Colonic mucosa (tissue), 4 donors: ENCODE measurements at regions of chr15 and their contacts with region 1.

Region 1: GRCh38 chr15:40323239-40323952 is at the start of gene INAFM2:
- DNase-seq: peak; percentile 87
- H3K4me3 ChIP-seq: peak within 1 kb of the TSS; percentile 81
- H3K27ac ChIP-seq: peak within 1 kb of the TSS; percentile 63
- H3K4me1 ChIP-seq: peaks cover 5% of the 10 kb centered on the region
- H3K27me3 ChIP-seq: no peaks in the 10 kb centered on the region
- CTCF ChIP-seq: peak; percentile 55
- total RNA-seq, gene INAFM2: 10.8 to 28.6 TPM

Region 2: GRCh38 chr15:40367686-40368611 is 44.6 kb after region 1 on chr15:
- intact Hi-C with region 1: loop called (anchors 5 kb)
- DNase-seq: peak; percentile 85
- H3K4me3 ChIP-seq: peak overlapping the region; percentile 32
- H3K27ac ChIP-seq: peak overlapping the region; percentile 44
- H3K4me1 ChIP-seq: peaks cover 9% of the 10 kb centered on the region
- H3K27me3 ChIP-seq: no peaks in the 10 kb centered on the region
- CTCF ChIP-seq: peak; percentile 79